H1 (cell line): ENCODE measurements at regions of chr12 and their contacts with region 1.

Region 1: GRCh38 chr12:77685112-77685511 is 145.6 kb upstream of the NAV3 start:
- DNase-seq: peak in 1 of 2 experiments; percentile 52
- H3K4me3 ChIP-seq: no peak overlapping the region
- H3K27ac ChIP-seq: no peak overlapping the region
- H3K4me1 ChIP-seq: no peaks in the 10 kb centered on the region
- H3K27me3 ChIP-seq: no peaks in the 10 kb centered on the region
- CTCF ChIP-seq: peak in 2 of 3 experiments; percentile 65 to 79; a peak in 3 of 4 replicates
- EP300 ChIP-seq: no peak
- POLR2A ChIP-seq: no peak
- RAD21 ChIP-seq: peak; percentile 81 to 86

Region 2: GRCh38 chr12:77152623-77153193 is 532.4 kb before region 1 on chr12:
- CTCF ChIA-PET with region 1: interaction called, 23 read pairs
- POLR2A ChIA-PET with region 1: no interaction called
- DNase-seq: no peak
- H3K4me3 ChIP-seq: no peak overlapping the region
- H3K27ac ChIP-seq: no peak overlapping the region
- H3K4me1 ChIP-seq: no peaks in the 10 kb centered on the region
- H3K27me3 ChIP-seq: peaks cover 0 to 2% (median 0%) of the 10 kb centered on the region in 4 experiments; a peak in 1 of 7 replicates
- CTCF ChIP-seq: peak in 2 of 3 experiments; percentile 52 to 53; a peak in 3 of 4 replicates
- EP300 ChIP-seq: no peak
- POLR2A ChIP-seq: no peak
- RAD21 ChIP-seq: peak; percentile 79 to 86

Region 3: GRCh38 chr12:77615331-77615730 is 69.8 kb before region 1 on chr12:
- CTCF ChIA-PET with region 1: interaction called, 50 read pairs
- POLR2A ChIA-PET with region 1: no interaction called
- DNase-seq: no peak
- H3K4me3 ChIP-seq: no peak overlapping the region
- H3K27ac ChIP-seq: no peak overlapping the region
- H3K4me1 ChIP-seq: peaks cover 0 to 10% (median 3%) of the 10 kb centered on the region in 4 experiments; a peak in 2 of 7 replicates
- H3K27me3 ChIP-seq: no peaks in the 10 kb centered on the region
- CTCF ChIP-seq: peak in 2 of 3 experiments; percentile 70 to 72; a peak in 3 of 4 replicates
- EP300 ChIP-seq: no peak
- POLR2A ChIP-seq: no peak
- RAD21 ChIP-seq: peak; percentile 74 to 81

Region 4: DNA sequence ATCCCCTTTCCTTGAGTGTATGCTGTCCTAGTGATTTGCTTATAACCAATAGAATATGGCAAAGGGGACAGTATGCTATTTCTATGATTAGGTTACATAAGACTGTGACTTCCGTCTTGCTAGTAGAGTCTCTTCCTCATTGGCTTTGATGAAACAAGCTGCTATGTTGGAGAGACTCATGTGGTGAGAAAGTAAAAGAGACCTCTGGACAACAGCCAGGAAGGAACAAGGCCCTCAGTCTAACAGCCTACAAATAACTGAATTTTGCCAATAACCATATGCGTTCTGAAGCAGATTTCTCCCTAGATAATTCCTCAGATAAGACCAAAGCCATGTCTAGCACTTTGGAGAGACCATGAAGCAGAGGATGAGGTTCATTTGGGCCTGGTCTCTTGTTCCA is 11.1 kb after region 1 on chr12:
- CTCF ChIA-PET with region 1: interaction called, 17 read pairs
- POLR2A ChIA-PET with region 1: no interaction called
- DNase-seq: no peak
- H3K4me3 ChIP-seq: no peak overlapping the region
- H3K27ac ChIP-seq: no peak overlapping the region
- H3K4me1 ChIP-seq: no peaks in the 10 kb centered on the region
- H3K27me3 ChIP-seq: no peaks in the 10 kb centered on the region
- CTCF ChIP-seq: no peak
- EP300 ChIP-seq: no peak
- POLR2A ChIP-seq: no peak
- RAD21 ChIP-seq: no peak